Activated CD4-positive, alpha-beta T cell treated with anti-CD3 and anti-CD28 coated beads, Interleukin-2, amount 10 ng/mL, durations not matched to agents 24 days and 14 days (primary cell): ENCODE measurements at regions of chr19 and their contacts with region 1.

Region 1: GRCh38 chr19:47157431-47158321 is 27.0 kb downstream of the SAE1 start:
- DNase-seq: peak; percentile 78
- H3K4me3 Mint-ChIP-seq: peak overlapping the region; percentile 80
- H3K27ac Mint-ChIP-seq: peak overlapping the region; percentile 93
- H3K4me1 Mint-ChIP-seq: peaks cover 46% of the 10 kb centered on the region
- H3K27me3 Mint-ChIP-seq: no peaks in the 10 kb centered on the region

Region 2: DNA sequence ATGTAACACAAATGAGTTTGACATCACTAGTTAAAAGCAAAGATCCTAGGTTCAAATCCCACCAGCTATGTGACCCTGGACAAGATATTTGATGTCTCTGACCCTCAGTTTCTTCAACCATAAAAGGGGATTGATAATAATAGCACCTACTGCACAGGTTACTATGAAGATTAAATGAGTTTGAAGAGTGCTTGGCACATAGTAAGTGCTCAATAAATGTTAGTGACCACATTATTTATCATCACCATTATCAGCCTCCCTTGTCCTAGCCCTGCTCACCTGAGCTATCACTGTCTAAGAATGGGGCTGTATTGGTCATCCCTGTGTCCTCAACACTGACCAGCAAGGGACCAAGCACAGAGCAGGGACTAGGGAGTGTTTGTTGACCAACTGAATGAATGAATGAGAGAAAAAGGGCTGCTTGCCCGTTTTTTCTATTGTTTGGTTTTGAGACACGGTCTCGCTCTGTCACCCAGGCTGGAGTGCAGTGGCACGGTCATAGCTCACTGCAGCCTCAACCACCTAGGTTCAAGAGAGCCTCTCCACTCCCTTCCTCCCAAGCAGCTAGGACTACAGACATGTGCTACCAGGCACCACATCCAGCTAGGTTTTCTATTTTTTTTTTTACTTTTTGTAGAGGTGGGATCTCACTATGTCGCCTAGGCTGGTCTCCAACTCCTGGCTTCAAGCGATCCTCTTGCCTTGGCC is 470.1 kb before region 1 on chr19:
- intact Hi-C with region 1: no loop called
- DNase-seq: no peak
- H3K4me3 Mint-ChIP-seq: no peak overlapping the region
- H3K27ac Mint-ChIP-seq: no peak overlapping the region
- H3K4me1 Mint-ChIP-seq: peaks cover 3% of the 10 kb centered on the region
- H3K27me3 Mint-ChIP-seq: no peaks in the 10 kb centered on the region

Region 3: DNA sequence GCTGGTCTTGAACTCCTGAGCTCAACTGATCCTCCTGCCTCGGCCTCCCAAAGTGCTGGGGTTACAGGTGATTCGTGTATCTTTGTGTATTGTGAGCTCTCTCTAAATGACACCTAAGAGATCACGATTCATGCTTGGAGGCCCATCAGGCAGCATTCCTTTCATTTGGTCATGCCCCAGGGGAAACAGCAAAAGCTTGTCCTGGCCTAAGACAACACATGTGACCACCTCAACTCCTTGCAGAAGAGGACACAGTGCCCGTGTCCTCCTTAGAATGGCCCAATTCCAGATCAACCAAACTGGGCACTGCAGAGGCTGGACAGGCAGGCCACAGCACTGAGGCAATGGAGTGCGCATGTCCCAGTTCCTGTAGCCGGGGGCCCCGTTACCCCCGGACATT is 76.6 kb before region 1 on chr19:
- intact Hi-C with region 1: no loop called
- DNase-seq: no peak
- H3K4me3 Mint-ChIP-seq: no peak overlapping the region
- H3K27ac Mint-ChIP-seq: peak overlapping the region; percentile 37
- H3K4me1 Mint-ChIP-seq: peaks cover 6% of the 10 kb centered on the region
- H3K27me3 Mint-ChIP-seq: no peaks in the 10 kb centered on the region

Region 4: DNA sequence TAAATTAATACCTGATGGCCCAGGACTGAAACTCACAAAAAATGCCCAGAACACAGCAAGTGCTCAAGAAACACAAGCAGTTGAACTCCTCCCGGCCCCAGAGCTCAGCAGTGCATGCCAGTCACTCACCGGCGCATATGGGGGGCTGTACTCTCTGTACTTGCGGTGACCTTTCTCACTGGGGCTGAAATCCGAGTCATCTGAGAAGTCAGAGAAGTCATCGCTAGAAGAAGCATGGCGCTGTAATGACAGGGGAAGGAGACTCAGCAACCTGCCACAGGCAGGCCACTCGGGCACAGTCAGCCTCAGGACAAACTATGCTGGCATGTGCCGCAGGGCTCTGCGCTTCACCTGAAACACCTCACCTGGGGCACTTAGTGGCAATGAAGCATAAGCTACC is 63.8 kb before region 1 on chr19:
- intact Hi-C with region 1: no loop called
- DNase-seq: peak; percentile 79
- H3K4me3 Mint-ChIP-seq: peak overlapping the region; percentile 86
- H3K27ac Mint-ChIP-seq: peak overlapping the region; percentile 94
- H3K4me1 Mint-ChIP-seq: peaks cover 66% of the 10 kb centered on the region
- H3K27me3 Mint-ChIP-seq: no peaks in the 10 kb centered on the region

Region 5: GRCh38 chr19:47176627-47177090 is 19.0 kb after region 1 on chr19:
- intact Hi-C with region 1: loop called (anchors 1 kb)
- DNase-seq: peak; percentile 82
- H3K4me3 Mint-ChIP-seq: peak overlapping the region; percentile 79
- H3K27ac Mint-ChIP-seq: peak overlapping the region; percentile 94
- H3K4me1 Mint-ChIP-seq: peaks cover 43% of the 10 kb centered on the region
- H3K27me3 Mint-ChIP-seq: no peaks in the 10 kb centered on the region

Region 6: GRCh38 chr19:47203254-47203653 is 45.6 kb after region 1 on chr19:
- intact Hi-C with region 1: no loop called
- DNase-seq: no peak
- H3K4me3 Mint-ChIP-seq: no peak overlapping the region
- H3K27ac Mint-ChIP-seq: peak overlapping the region; percentile 66
- H3K4me1 Mint-ChIP-seq: peaks cover 12% of the 10 kb centered on the region
- H3K27me3 Mint-ChIP-seq: no peaks in the 10 kb centered on the region

Region 7: GRCh38 chr19:47225746-47226425 is 68.2 kb after region 1 on chr19:
- intact Hi-C with region 1: loop called (anchors 2 kb)
- DNase-seq: peak; percentile 96
- H3K4me3 Mint-ChIP-seq: peak overlapping the region; percentile 88
- H3K27ac Mint-ChIP-seq: peak overlapping the region; percentile 92
- H3K4me1 Mint-ChIP-seq: peaks cover 13% of the 10 kb centered on the region
- H3K27me3 Mint-ChIP-seq: no peaks in the 10 kb centered on the region